Activated CD4-positive, alpha-beta memory T cell treated with anti-CD3 and anti-CD28 coated beads for 36 hours (primary cell): ENCODE measurements at regions of chr2 and their contacts with region 1.

Region 1: DNA sequence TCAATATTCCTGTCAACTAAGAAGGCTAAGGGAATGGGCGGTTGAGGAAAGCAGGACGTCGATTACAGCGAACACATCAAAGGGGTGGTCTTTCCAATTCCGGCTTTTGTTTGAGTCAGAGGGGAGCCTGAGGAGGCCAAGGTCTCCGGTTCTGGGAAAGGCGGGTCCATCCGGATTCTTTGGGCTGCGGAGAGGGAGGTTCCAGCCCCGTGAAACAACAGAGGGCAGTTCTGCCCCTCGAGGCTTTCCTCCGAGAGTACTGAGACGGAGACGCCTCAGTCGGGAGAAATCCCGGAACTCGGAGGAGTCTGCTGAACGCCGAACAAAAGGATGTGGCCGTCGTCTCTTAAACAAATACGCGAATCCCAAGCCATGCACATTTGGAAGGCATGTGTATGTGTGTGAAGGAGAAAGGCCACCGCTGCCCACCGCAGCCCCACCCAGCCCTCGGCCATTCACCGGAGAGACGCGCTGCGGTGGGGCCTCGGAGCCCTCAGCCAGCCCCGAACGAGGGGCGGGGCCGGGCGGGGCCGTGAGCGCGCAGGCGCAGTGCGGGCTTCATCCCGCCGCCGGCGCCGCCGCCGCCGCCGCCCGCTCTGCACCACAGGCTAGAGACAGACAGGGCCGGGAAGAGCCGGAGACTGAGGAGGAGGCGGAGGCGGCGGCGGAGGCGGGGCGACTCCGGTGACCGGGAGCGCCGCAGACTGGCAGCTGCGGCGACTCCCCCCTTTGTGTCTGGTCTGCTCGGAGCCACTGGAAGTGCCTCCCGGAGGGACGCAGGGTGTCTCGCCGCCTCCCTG is at the start of gene BMPR2:
- DNase-seq: peak; percentile 88
- H3K4me3 Mint-ChIP-seq: peak within 1 kb of the TSS; percentile 98
- H3K27ac Mint-ChIP-seq: peak within 1 kb of the TSS; percentile 80
- H3K4me1 Mint-ChIP-seq: peaks cover 24% of the 10 kb centered on the region
- H3K27me3 Mint-ChIP-seq: no peaks in the 10 kb centered on the region
- total RNA-seq, gene BMPR2: 8.2 to 8.7 TPM

Region 2: GRCh38 chr2:201980389-201980831 is 395.4 kb before region 1 on chr2:
- CTCF ChIA-PET with region 1: no interaction called
- POLR2A ChIA-PET with region 1: no interaction called
- intact Hi-C with region 1: no loop called
- DNase-seq: no peak
- H3K4me3 Mint-ChIP-seq: no peak overlapping the region
- H3K27ac Mint-ChIP-seq: no peak overlapping the region
- H3K4me1 Mint-ChIP-seq: no peaks in the 10 kb centered on the region
- H3K27me3 Mint-ChIP-seq: no peaks in the 10 kb centered on the region

Region 3: GRCh38 chr2:202299712-202300111 is 76.1 kb before region 1 on chr2:
- CTCF ChIA-PET with region 1: no interaction called
- POLR2A ChIA-PET with region 1: no interaction called
- intact Hi-C with region 1: loop called (anchors 2 kb)
- DNase-seq: no peak
- H3K4me3 Mint-ChIP-seq: no peak overlapping the region
- H3K27ac Mint-ChIP-seq: peak overlapping the region; percentile 69
- H3K4me1 Mint-ChIP-seq: peaks cover 39% of the 10 kb centered on the region
- H3K27me3 Mint-ChIP-seq: no peaks in the 10 kb centered on the region

Region 4: DNA sequence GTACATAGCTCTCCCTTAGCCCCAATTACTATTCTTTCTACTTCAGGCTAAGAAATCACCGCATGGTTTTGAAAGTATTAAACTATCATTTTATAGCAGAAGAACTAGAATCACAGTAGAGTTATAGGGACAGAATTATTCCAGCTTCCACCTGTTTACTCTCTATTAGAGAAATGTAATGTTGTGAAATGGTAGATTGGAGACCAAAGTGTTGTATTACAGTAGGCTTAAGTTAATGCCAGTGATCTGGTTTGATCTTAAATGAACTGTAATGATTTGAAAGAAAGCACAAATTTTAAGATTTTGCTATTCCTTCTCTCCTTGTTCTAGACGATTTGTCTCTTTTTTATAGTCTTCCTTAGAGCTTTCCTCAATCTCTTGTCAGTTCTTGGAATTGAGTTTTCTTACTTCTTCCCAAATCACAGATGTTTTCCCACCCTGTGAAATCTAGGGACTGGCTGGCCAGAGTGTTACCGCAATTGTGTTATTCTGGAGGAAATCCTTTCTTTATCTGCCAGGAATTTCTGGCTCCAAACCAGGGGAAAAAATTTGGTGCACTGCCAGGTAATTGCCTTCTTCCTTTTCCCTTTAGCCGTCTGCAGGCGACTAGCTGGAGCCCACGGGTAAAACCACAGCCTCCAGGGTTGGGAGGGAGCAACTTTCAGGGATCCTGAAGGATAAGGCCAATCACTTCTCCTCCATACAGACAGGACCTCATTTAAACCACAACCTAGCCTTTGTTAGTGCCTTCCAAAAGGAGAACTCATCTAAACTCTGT is 58.5 kb before region 1 on chr2:
- CTCF ChIA-PET with region 1: no interaction called
- POLR2A ChIA-PET with region 1: no interaction called
- intact Hi-C with region 1: no loop called
- DNase-seq: no peak
- H3K4me3 Mint-ChIP-seq: no peak overlapping the region
- H3K27ac Mint-ChIP-seq: no peak overlapping the region
- H3K4me1 Mint-ChIP-seq: no peaks in the 10 kb centered on the region
- H3K27me3 Mint-ChIP-seq: no peaks in the 10 kb centered on the region